ENCODE measurements at regions of chr17 and their contacts with region 1.

Region 1: GRCh38 chr17:43576563-43577229 is 30.6 kb upstream of the ETV4 start:
- DNase-seq: peak; percentile 83
- ATAC-seq: peak; percentile 28
- H3K4me3 ChIP-seq: no peak overlapping the region
- H3K4me3 Mint-ChIP-seq: no peak overlapping the region
- H3K27ac ChIP-seq: no peak overlapping the region
- H3K27ac Mint-ChIP-seq: peak overlapping the region; percentile 37
- H3K4me1 ChIP-seq: peaks cover 22 to 25% of the 10 kb centered on the region in 2 donors
- H3K4me1 Mint-ChIP-seq: peaks cover 29% of the 10 kb centered on the region
- H3K27me3 ChIP-seq: peaks cover 0 to 15% (median 0%) of the 10 kb centered on the region in 4 experiments
- H3K27me3 Mint-ChIP-seq: peaks cover 9% of the 10 kb centered on the region
- CTCF ChIP-seq: peak; percentile 99

Region 2: GRCh38 chr17:42809250-42809649 is 767.4 kb before region 1 on chr17:
- CTCF ChIA-PET with region 1: no interaction called
- POLR2A ChIA-PET with region 1: no interaction called
- intact Hi-C with region 1: no loop called
- DNase-seq: no peak
- ATAC-seq: no peak
- H3K4me3 ChIP-seq: no peak overlapping the region
- H3K4me3 Mint-ChIP-seq: no peak overlapping the region
- H3K27ac ChIP-seq: no peak overlapping the region
- H3K27ac Mint-ChIP-seq: no peak overlapping the region
- H3K4me1 ChIP-seq: no peaks in the 10 kb centered on the region
- H3K4me1 Mint-ChIP-seq: no peaks in the 10 kb centered on the region
- H3K27me3 ChIP-seq: no peaks in the 10 kb centered on the region
- H3K27me3 Mint-ChIP-seq: no peaks in the 10 kb centered on the region
- CTCF ChIP-seq: no peak

Region 3: GRCh38 chr17:43170140-43170765 is 406.4 kb before region 1 on chr17:
- CTCF ChIA-PET with region 1: no interaction called
- POLR2A ChIA-PET with region 1: no interaction called
- intact Hi-C with region 1: no loop called
- DNase-seq: peak; percentile 96
- ATAC-seq: peak; percentile 63
- H3K4me3 ChIP-seq: peak overlapping the region; percentile 70 to 99 (median 90)
- H3K4me3 Mint-ChIP-seq: no peak overlapping the region
- H3K27ac ChIP-seq: peak overlapping the region; percentile 100
- H3K27ac Mint-ChIP-seq: no peak overlapping the region
- H3K4me1 ChIP-seq: peaks cover 20 to 39% of the 10 kb centered on the region in 2 donors
- H3K4me1 Mint-ChIP-seq: peaks cover 21% of the 10 kb centered on the region
- H3K27me3 ChIP-seq: no peaks in the 10 kb centered on the region
- H3K27me3 Mint-ChIP-seq: no peaks in the 10 kb centered on the region
- CTCF ChIP-seq: no peak

Region 4: DNA sequence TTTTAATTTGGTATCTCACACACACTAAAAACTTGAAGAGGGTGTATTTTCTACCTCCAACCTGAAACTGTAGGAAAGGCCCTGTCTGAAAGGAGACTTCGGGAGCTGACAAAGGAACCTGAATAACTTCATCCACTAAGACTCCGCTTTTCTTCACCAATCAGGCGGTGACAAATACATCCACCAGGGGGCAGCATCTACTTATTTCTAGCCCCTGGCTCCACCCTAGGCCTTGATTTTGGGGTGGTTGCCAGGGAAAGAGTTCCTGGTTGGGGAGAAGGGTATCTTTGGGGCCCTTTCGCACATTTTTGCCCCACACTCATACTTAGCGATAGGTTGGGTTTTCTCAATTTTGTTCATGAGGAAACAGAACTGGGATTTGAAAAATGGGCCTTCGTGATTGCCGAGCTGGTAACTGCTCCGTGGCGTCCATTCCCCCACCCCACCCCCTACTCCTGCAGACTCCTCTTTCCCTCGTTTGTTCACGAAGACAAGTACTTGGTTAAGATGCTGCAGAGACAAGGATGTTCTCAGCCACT is 182.7 kb before region 1 on chr17:
- CTCF ChIA-PET with region 1: interaction called, 6 read pairs
- POLR2A ChIA-PET with region 1: no interaction called
- intact Hi-C with region 1: loop called (anchors 10 kb)
- DNase-seq: peak; percentile 90
- ATAC-seq: peak; percentile 22
- H3K4me3 ChIP-seq: no peak overlapping the region
- H3K4me3 Mint-ChIP-seq: no peak overlapping the region
- H3K27ac ChIP-seq: no peak overlapping the region
- H3K27ac Mint-ChIP-seq: no peak overlapping the region
- H3K4me1 ChIP-seq: peaks cover 24 to 50% of the 10 kb centered on the region in 2 donors
- H3K4me1 Mint-ChIP-seq: peaks cover 43% of the 10 kb centered on the region
- H3K27me3 ChIP-seq: no peaks in the 10 kb centered on the region
- H3K27me3 Mint-ChIP-seq: no peaks in the 10 kb centered on the region
- CTCF ChIP-seq: peak; percentile 87

Region 5: DNA sequence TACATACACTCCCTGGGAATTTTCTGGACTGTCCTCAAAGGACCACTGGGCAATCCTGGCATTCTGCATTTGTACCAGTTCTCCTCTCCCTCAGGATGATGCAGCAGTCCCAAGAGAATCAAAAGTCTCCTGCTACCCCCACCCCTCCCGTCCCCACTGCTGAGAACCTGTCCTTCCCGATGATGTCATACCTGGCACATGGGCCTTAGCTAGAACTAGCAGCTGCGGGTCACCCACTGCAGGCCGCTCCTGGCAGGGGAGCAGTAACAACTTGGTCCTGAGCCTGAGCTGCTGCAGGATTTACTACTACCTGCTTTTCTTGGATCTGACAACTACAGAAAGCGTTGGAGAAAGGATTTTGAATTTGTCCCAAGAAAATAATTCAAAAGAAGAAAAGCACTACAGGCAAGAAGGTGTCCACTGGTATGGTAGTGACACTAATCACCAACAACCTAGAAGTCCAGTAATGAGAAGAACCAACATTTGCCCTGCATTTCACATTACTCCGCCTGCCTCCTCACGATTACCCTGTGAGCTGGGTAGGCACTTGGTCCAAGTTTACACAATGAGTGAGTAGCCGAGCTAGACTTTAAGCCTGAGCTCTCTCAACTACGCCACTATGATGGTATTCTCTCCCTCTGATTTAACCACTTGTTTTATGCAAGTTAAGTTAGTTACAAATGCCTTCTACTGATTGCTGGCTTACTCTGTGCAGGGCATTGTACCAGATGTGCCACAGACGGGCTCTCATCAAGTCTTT is 24.8 kb after region 1 on chr17:
- CTCF ChIA-PET with region 1: interaction called, 10 read pairs
- POLR2A ChIA-PET with region 1: no interaction called
- intact Hi-C with region 1: no loop called
- DNase-seq: no peak
- ATAC-seq: no peak
- H3K4me3 ChIP-seq: no peak overlapping the region
- H3K4me3 Mint-ChIP-seq: no peak overlapping the region
- H3K27ac ChIP-seq: no peak overlapping the region
- H3K27ac Mint-ChIP-seq: no peak overlapping the region
- H3K4me1 ChIP-seq: no peaks in the 10 kb centered on the region
- H3K4me1 Mint-ChIP-seq: peaks cover 6% of the 10 kb centered on the region
- H3K27me3 ChIP-seq: peaks cover 0 to 3% (median 1%) of the 10 kb centered on the region in 4 experiments
- H3K27me3 Mint-ChIP-seq: peaks cover 24% of the 10 kb centered on the region
- CTCF ChIP-seq: no peak

Region 6: GRCh38 chr17:43673516-43674323 is 97.0 kb after region 1 on chr17:
- CTCF ChIA-PET with region 1: no interaction called
- POLR2A ChIA-PET with region 1: interaction called, 5 read pairs
- intact Hi-C with region 1: loop called (anchors 1 kb)
- DNase-seq: peak; percentile 80
- ATAC-seq: peak; percentile 70
- H3K4me3 ChIP-seq: no peak overlapping the region
- H3K4me3 Mint-ChIP-seq: no peak overlapping the region
- H3K27ac ChIP-seq: no peak overlapping the region
- H3K27ac Mint-ChIP-seq: peak overlapping the region; percentile 11
- H3K4me1 ChIP-seq: peaks cover 6 to 14% of the 10 kb centered on the region in 2 donors
- H3K4me1 Mint-ChIP-seq: peaks cover 7% of the 10 kb centered on the region
- H3K27me3 ChIP-seq: peaks cover 0 to 9% (median 0%) of the 10 kb centered on the region in 4 experiments
- H3K27me3 Mint-ChIP-seq: peaks cover 14% of the 10 kb centered on the region
- CTCF ChIP-seq: peak; percentile 88

Region 7: DNA sequence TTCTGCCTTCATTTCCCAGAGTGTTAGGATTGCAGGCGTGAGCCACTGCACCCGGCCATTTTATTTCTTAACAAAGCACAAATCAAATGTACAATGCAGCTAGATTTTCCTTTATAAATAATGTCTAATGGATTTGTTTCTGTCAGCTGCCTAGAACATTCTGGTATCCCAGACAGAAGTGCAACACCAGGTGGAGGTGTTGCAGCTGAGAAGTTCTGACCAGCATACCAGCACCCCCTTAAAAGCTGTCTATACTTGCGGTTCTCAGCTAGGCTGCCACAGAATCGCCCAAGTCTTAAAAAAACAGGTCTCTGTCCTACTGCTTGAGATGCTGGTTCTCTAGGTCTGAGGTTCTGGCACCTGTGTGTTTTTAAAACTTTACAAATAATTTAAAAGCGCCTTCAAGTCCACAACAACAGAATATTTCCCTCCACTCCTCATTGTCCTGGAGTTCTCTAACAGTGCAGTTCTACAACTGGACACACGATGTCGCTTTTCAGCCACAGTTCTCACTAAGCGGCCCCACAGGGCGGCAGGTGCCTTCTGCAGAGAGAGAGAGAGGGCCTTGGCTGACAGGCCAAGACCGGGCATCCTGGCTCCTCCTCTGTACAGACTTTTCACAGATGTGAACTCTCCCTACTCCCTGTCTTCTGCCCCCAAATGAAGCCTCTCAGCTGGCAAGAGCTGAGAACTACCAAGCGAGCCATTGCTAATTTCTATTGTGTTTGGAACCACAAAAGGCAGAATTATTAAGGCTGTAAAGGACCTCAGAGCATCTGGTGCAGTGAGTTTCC is 117.6 kb after region 1 on chr17:
- CTCF ChIA-PET with region 1: interaction called, 87 read pairs
- POLR2A ChIA-PET with region 1: no interaction called
- intact Hi-C with region 1: loop called (anchors 1 kb)
- DNase-seq: peak; percentile 84
- ATAC-seq: peak; percentile 99
- H3K4me3 ChIP-seq: no peak overlapping the region
- H3K4me3 Mint-ChIP-seq: no peak overlapping the region
- H3K27ac ChIP-seq: no peak overlapping the region
- H3K27ac Mint-ChIP-seq: no peak overlapping the region
- H3K4me1 ChIP-seq: no peaks in the 10 kb centered on the region
- H3K4me1 Mint-ChIP-seq: no peaks in the 10 kb centered on the region
- H3K27me3 ChIP-seq: peaks cover 0 to 16% (median under 1%) of the 10 kb centered on the region in 4 experiments
- H3K27me3 Mint-ChIP-seq: peaks cover 29% of the 10 kb centered on the region
- CTCF ChIP-seq: peak; percentile 93

Region 8: DNA sequence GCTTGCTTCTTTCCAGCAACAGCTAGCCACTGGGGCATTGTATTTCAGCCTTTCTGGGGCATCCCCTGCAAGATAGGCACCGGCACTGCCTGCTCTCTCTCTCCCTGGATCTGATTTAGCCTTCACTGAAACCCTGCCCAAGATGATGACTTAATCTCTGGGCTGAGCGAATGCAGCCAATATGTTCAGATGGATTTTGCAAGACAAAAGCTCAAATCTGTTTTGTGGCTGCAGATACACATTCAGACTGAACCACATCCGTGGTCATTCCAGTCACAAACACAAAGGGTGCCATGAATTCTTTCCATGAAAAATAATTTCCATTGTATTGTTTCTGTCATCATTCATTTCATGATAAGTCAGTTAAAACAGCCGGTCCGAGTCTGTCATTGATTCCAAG is 157.7 kb after region 1 on chr17:
- CTCF ChIA-PET with region 1: no interaction called
- POLR2A ChIA-PET with region 1: no interaction called
- intact Hi-C with region 1: no loop called
- DNase-seq: no peak
- ATAC-seq: no peak
- H3K4me3 ChIP-seq: no peak overlapping the region
- H3K4me3 Mint-ChIP-seq: no peak overlapping the region
- H3K27ac ChIP-seq: no peak overlapping the region
- H3K27ac Mint-ChIP-seq: no peak overlapping the region
- H3K4me1 ChIP-seq: no peaks in the 10 kb centered on the region
- H3K4me1 Mint-ChIP-seq: no peaks in the 10 kb centered on the region
- H3K27me3 ChIP-seq: no peaks in the 10 kb centered on the region
- H3K27me3 Mint-ChIP-seq: peaks cover 29% of the 10 kb centered on the region
- CTCF ChIP-seq: no peak

Region 9: DNA sequence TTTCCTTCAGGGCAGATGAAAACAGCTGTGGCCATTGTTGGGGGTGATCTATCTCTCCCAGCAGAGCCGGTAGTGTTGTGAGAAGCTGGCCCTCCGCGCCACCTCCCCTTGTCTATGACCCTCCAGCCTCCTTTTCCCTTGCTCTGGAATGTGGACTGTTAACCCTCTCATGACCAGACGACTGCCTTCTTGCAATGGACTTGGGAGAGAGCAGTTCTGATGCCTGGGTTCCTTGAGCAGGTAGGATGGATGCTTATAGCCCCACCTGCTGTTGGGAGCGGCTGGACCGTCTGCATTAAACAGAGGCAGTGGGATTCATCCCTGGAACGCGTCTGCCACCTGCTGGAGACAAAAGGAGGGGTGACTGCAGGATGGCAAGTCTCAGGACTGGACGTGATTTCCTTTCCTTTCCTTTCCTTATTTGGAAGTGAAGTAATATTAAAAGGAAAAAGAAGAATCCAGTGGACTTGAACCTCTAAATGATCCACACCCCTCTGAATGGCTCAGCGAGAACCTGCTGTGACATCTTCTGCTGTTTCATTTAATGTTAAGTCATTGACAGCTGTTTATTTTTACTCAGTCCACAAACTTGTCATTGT is 183.7 kb after region 1 on chr17:
- CTCF ChIA-PET with region 1: interaction called, 153 read pairs
- POLR2A ChIA-PET with region 1: no interaction called
- intact Hi-C with region 1: loop called (anchors 1 kb)
- DNase-seq: peak; percentile 87
- ATAC-seq: peak; percentile 98
- H3K4me3 ChIP-seq: no peak overlapping the region
- H3K4me3 Mint-ChIP-seq: no peak overlapping the region
- H3K27ac ChIP-seq: no peak overlapping the region
- H3K27ac Mint-ChIP-seq: no peak overlapping the region
- H3K4me1 ChIP-seq: peaks cover 0 to 3% of the 10 kb centered on the region in 2 donors
- H3K4me1 Mint-ChIP-seq: no peaks in the 10 kb centered on the region
- H3K27me3 ChIP-seq: peaks cover 0 to 22% (median 6%) of the 10 kb centered on the region in 4 experiments
- H3K27me3 Mint-ChIP-seq: peaks cover 24% of the 10 kb centered on the region
- CTCF ChIP-seq: peak; percentile 96

Region 10: DNA sequence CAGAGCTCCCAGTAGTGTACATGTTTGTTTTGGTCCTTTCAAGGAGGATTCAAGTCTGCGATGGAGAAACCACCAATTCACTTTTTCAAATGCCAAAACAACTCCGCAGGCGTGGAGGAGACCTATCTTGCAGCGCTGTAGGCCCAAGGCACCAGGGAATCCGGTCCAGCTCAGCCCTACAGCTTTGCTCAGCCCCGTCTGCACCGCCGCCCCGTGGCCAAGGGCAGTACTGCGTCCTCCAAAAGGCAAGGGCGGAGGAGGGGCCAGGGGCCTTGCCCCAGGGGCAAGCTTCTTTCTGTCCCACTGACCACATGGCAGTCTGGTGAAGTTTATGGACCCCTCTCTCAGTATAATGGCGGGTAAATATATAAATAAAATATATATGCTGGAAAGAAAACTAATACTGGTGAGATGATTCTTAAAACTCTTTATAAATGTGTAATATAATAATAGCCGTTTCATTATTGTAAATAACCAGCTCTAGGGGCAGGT is 269.6 kb after region 1 on chr17:
- CTCF ChIA-PET with region 1: interaction called, 13 read pairs
- POLR2A ChIA-PET with region 1: no interaction called
- intact Hi-C with region 1: no loop called
- DNase-seq: peak; percentile 71
- ATAC-seq: peak; percentile 98
- H3K4me3 ChIP-seq: no peak overlapping the region
- H3K4me3 Mint-ChIP-seq: no peak overlapping the region
- H3K27ac ChIP-seq: no peak overlapping the region
- H3K27ac Mint-ChIP-seq: no peak overlapping the region
- H3K4me1 ChIP-seq: no peaks in the 10 kb centered on the region
- H3K4me1 Mint-ChIP-seq: no peaks in the 10 kb centered on the region
- H3K27me3 ChIP-seq: peaks cover 0 to 8% (median 0%) of the 10 kb centered on the region in 4 experiments
- H3K27me3 Mint-ChIP-seq: peaks cover 28% of the 10 kb centered on the region
- CTCF ChIP-seq: peak; percentile 95

Measured in B cell (primary cell).